AG04449 (cell line): ENCODE measurements at regions of chr10 and their contacts with region 1.

Region 1: GRCh38 chr10:70169649-70170364 is 507 bp downstream of the SAR1A start:
- DNase-seq: no peak
- H3K4me3 ChIP-seq: peak overlapping the region; percentile 95
- CTCF ChIP-seq: no peak

Region 2: DNA sequence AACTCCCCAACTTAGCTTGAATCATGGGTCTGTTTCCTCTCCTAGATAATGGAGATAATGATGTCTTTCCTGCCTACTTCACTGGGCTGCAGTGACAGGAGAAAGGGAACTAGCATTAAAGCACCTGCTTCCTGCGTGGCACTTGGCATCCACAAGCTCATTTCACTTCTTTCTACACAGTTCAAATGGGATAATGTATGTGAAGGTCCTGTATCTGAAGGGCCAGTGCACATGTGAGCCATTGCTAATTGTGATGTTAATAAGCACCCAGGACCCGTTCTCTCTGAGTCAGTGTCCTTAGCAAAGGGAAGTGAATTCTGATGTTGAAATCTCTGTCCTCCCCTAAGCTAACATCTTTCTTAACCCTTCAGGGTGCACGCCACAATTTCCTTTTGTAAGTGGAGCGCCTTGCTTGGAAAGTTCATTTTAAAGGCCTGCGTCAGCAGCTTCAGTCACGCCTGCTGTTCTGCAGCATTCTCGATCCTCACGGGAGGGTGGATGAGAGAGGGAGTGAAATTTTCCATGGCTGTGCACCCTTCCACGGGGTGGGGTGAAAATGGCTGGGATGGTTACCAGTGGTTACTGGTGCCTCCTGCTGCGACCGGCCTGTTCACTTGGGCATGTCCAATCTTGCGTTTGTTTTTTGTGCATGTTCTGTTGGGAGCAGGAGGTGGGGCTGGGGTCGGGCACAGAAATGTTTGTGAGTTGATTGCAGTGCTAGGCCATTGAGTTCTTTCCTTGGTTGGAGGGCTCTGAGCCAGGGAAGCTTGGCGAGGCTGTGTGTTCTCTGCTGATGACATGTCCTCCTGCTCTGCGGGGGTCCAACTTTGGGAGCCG is 832.3 kb before region 1 on chr10:
- CTCF ChIA-PET with region 1: no interaction called
- POLR2A ChIA-PET with region 1: no interaction called
- DNase-seq: no peak
- H3K4me3 ChIP-seq: no peak overlapping the region
- CTCF ChIP-seq: no peak

Region 3: GRCh38 chr10:70155255-70155838 is 14.5 kb before region 1 on chr10:
- CTCF ChIA-PET with region 1: interaction called, 44 read pairs
- POLR2A ChIA-PET with region 1: interaction called, 11 read pairs
- DNase-seq: no peak
- H3K4me3 ChIP-seq: no peak overlapping the region
- CTCF ChIP-seq: no peak

Region 4: GRCh38 chr10:70191972-70192305 is 22.1 kb after region 1 on chr10:
- CTCF ChIA-PET with region 1: interaction called, 3 read pairs
- POLR2A ChIA-PET with region 1: interaction called, 13 read pairs
- DNase-seq: peak; percentile 95
- H3K4me3 ChIP-seq: no peak overlapping the region
- CTCF ChIP-seq: no peak